ENCODE measurements at regions of chr1 and their contacts with region 1.

Region 1: GRCh38 chr1:64378826-64379225 is 91.1 kb upstream of the CACHD1 start:
- DNase-seq: no peak
- ATAC-seq: peak; percentile 18 to 70 (median 44)
- H3K4me3 ChIP-seq: no peak overlapping the region
- H3K27ac ChIP-seq: no peak overlapping the region
- H3K4me1 ChIP-seq: no peaks in the 10 kb centered on the region
- H3K27me3 ChIP-seq: no peaks in the 10 kb centered on the region
- CTCF ChIP-seq: peak; percentile 21 to 58 (median 55)
- POLR2A ChIP-seq: no peak

Region 2: GRCh38 chr1:64212031-64212430 is 166.8 kb before region 1 on chr1:
- intact Hi-C with region 1: no loop called
- DNase-seq: no peak
- ATAC-seq: no peak
- H3K4me3 ChIP-seq: no peak overlapping the region
- H3K27ac ChIP-seq: no peak overlapping the region
- H3K4me1 ChIP-seq: no peaks in the 10 kb centered on the region
- H3K27me3 ChIP-seq: no peaks in the 10 kb centered on the region
- CTCF ChIP-seq: no peak
- POLR2A ChIP-seq: no peak

Region 3: GRCh38 chr1:64675718-64676345 is 297.0 kb after region 1 on chr1:
- intact Hi-C with region 1: loop called in 1 of 2 experiments (anchors 10 kb)
- DNase-seq: no peak
- ATAC-seq: peak; percentile 53 to 67 (median 62)
- H3K4me3 ChIP-seq: no peak overlapping the region
- H3K27ac ChIP-seq: no peak overlapping the region
- H3K4me1 ChIP-seq: no peaks in the 10 kb centered on the region
- H3K27me3 ChIP-seq: no peaks in the 10 kb centered on the region
- CTCF ChIP-seq: peak; percentile 37 to 76 (median 74)
- POLR2A ChIP-seq: no peak

Region 4: DNA sequence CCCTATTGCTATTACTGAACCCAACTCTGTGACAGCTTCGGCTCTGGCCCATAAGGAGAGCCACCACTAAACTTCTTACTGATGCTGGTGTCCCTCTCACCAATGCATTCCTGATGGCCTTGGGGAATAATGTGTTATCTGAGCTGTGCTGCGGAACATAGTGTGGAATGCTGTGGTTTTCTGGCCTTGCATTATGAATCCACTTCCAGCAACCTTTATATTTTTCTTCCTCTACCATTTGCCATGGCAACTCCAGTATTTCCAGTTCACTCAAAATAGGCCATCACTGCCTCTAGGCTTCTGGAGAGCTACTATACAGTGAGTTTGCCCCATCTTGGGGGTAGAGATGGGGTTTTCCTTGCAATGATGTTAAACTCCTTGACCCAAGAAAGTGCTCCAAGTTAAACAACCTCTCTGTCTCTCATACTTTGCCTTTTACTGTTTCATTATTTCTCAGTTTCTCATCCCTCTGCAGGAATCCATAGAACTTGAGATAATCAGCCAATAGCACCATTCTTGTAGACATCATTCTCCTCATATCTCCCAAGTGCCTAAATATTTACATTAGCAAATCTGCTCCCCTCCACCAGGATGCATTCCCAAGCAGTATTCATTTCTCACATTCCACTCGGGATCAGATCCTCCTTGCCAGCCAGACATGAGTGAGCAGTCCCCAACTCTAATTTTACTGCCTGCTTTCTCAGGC is 354.9 kb after region 1 on chr1:
- intact Hi-C with region 1: no loop called
- DNase-seq: no peak
- ATAC-seq: no peak
- H3K4me3 ChIP-seq: no peak overlapping the region
- H3K27ac ChIP-seq: no peak overlapping the region
- H3K4me1 ChIP-seq: no peaks in the 10 kb centered on the region
- H3K27me3 ChIP-seq: no peaks in the 10 kb centered on the region
- CTCF ChIP-seq: no peak
- POLR2A ChIP-seq: no peak

Measured in right lobe of liver (tissue), 6 donors.